ENCODE measurements at regions of chr9 and their contacts with region 1.

Region 1: GRCh38 chr9:35603987-35604577 is 980 bp upstream of the TESK1 start:
- DNase-seq: peak; percentile 94 to 100 (median 99)
- ATAC-seq: peak; percentile 83 to 87
- H3K4me3 Mint-ChIP-seq: peak overlapping the region; percentile 92 to 99 (median 96)
- H3K27ac Mint-ChIP-seq: peak overlapping the region; percentile 93 to 99 (median 98)
- H3K4me1 Mint-ChIP-seq: peaks cover 26 to 40% (median 34%) of the 10 kb centered on the region in 4 donors
- H3K27me3 Mint-ChIP-seq: no peaks in the 10 kb centered on the region

Region 2: GRCh38 chr9:35548571-35548970 is 55.5 kb before region 1 on chr9:
- POLR2A ChIA-PET with region 1: no interaction called
- DNase-seq: no peak
- ATAC-seq: no peak
- H3K4me3 Mint-ChIP-seq: no peak overlapping the region
- H3K27ac Mint-ChIP-seq: peak overlapping the region in 1 of 10 donors; percentile 59
- H3K4me1 Mint-ChIP-seq: no peaks in the 10 kb centered on the region
- H3K27me3 Mint-ChIP-seq: peaks cover 0 to 6% (median 1%) of the 10 kb centered on the region in 5 donors

Region 3: DNA sequence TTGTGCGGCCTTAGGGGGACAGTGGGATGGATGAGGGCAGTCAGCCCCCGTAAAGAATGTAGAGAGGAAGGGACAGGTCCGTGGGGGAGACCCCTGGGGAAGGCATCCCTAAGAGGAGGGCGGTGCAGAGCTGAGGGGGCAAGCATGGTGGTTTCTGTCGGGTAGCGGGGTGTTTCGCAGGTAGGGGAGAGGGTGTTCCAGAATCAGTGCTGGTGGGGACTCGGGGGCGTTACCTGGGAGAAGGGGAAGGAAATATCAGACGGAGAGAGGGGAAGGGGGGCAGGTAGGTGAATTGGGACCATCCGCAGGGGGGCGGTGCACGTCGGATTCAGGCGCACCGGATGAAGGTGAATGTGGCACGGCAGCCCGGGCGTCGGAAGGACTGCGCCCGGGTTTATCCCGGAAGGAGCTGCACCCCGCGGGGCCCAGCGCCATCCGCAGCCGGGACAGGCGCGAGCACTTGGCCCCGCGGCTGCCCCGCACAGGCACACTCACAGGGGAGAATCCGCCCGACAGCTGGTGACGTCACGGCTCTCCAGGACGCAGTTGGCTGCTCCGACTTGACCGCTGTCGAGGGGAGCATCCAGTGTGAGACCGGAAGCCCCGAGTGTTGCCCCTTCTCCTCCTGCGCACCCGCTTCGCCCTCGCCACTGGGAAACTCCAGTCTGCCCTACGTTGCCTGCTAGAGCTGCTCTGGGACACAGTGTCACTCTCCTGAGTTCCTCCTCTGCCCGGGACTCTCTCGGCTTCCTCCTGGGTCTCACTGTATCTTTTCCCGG is 12.8 kb after region 1 on chr9:
- POLR2A ChIA-PET with region 1: interaction called, 24 read pairs
- DNase-seq: peak; percentile 53 to 84 (median 64)
- ATAC-seq: peak; percentile 74 to 84
- H3K4me3 Mint-ChIP-seq: peak overlapping the region; percentile 82 to 94 (median 87)
- H3K27ac Mint-ChIP-seq: peak overlapping the region; percentile 90 to 98 (median 94)
- H3K4me1 Mint-ChIP-seq: peaks cover 32 to 88% (median 45%) of the 10 kb centered on the region in 4 donors
- H3K27me3 Mint-ChIP-seq: no peaks in the 10 kb centered on the region

Measured in naive thymus-derived CD8-positive, alpha-beta T cell (primary cell).